Endothelial cell of umbilical vein (primary cell): ENCODE measurements at regions of chr3 and their contacts with region 1.

Region 1: GRCh38 chr3:15427182-15427880 is at the starts of genes EAF1 and METTL6:
- DNase-seq: peak; percentile 72
- H3K4me3 ChIP-seq: peak within 1 kb of the TSS; percentile 70 to 90 (median 86)
- H3K27ac ChIP-seq: peak within 1 kb of the TSS; percentile 47
- H3K4me1 ChIP-seq: peaks cover 17% of the 10 kb centered on the region
- H3K27me3 ChIP-seq: no peaks in the 10 kb centered on the region
- CTCF ChIP-seq: peak; percentile 4 to 28
- POLR2A ChIP-seq: peak; percentile 66
- total RNA-seq, gene EAF1: 16.0 and 18.2 TPM in 2 replicates
- total RNA-seq, gene METTL6: 11.7 and 19.5 TPM in 2 replicates

Region 2: DNA sequence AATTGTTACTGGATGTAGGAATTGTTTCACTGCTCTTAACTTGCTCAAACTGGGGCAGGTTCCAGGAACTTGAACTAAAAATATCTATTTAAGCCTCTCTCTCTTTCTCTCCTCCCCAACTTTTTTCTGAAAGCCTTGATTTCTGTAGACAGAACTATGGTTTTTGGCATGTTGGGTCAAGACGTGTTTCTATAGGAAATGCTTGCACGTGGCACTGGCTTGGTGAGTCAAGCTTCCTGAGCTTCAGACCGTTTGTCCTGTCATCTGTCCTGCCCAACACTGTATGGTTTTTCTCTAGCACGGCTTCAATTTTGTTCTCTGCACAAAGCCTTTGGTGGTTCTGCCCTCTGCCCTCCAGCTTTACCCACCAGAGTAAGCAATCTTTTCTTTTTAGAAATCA is 13.6 kb after region 1 on chr3:
- CTCF ChIA-PET with region 1: interaction called, 3 read pairs
- POLR2A ChIA-PET with region 1: no interaction called
- dilution Hi-C with region 1: no loop called
- intact Hi-C with region 1: loop called (anchors 1 kb)
- DNase-seq: peak; percentile 67
- H3K4me3 ChIP-seq: no peak overlapping the region
- H3K27ac ChIP-seq: peak overlapping the region; percentile 57
- H3K4me1 ChIP-seq: peaks cover 22% of the 10 kb centered on the region
- H3K27me3 ChIP-seq: no peaks in the 10 kb centered on the region
- CTCF ChIP-seq: no peak
- POLR2A ChIP-seq: no peak

Region 3: GRCh38 chr3:15557511-15557946 is 130.2 kb after region 1 on chr3:
- CTCF ChIA-PET with region 1: no interaction called
- POLR2A ChIA-PET with region 1: no interaction called
- dilution Hi-C with region 1: no loop called
- intact Hi-C with region 1: loop called (anchors 1 kb)
- DNase-seq: peak; percentile 93
- H3K4me3 ChIP-seq: no peak overlapping the region
- H3K27ac ChIP-seq: no peak overlapping the region
- H3K4me1 ChIP-seq: no peaks in the 10 kb centered on the region
- H3K27me3 ChIP-seq: no peaks in the 10 kb centered on the region
- CTCF ChIP-seq: peak; percentile 36 to 37
- POLR2A ChIP-seq: no peak